BJ (cell line): ENCODE measurements at regions of chr2 and their contacts with region 1.

Region 1: DNA sequence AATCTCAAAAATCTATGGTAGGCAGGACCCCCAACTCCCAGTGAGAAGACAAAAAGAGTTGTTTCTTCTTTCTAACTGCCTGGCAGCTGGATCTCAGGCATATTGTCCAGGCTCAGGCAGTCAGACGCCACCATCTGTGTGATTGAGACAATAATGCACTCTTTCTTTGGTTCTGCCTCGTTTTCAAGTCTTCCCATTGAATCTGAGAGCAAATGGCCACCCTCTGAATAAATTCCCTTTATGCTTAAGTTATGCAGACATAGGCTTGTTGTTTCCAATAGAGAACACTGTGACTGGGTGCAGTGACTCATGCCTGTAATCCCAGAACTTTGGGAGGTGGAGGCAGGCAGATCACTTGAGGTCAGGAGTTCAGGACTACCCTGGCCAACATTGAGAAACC is 15.3 kb upstream of the CD207 start:
- DNase-seq: no peak
- H3K4me3 ChIP-seq: no peak overlapping the region
- H3K27me3 ChIP-seq: peaks cover 3% of the 10 kb centered on the region; the same call in 1 of the 2 replicates
- CTCF ChIP-seq: no peak

Region 2: GRCh38 chr2:70861777-70862625 is 11.1 kb after region 1 on chr2:
- CTCF ChIA-PET with region 1: interaction called, 10 read pairs
- POLR2A ChIA-PET with region 1: no interaction called
- DNase-seq: peak; percentile 13
- H3K4me3 ChIP-seq: no peak overlapping the region
- H3K27me3 ChIP-seq: peaks cover 17% of the 10 kb centered on the region
- CTCF ChIP-seq: peak; percentile 98